SK-N-SH (cell line): ENCODE measurements at regions of chr17 and their contacts with region 1.

Region 1: GRCh38 chr17:47229535-47230443 is 20.6 kb downstream of the MYL4 start:
- DNase-seq: peak; percentile 87
- H3K4me3 ChIP-seq: peak overlapping the region; percentile 4 to 10; a peak in 1 of 4 replicates
- H3K27ac ChIP-seq: peak overlapping the region in 1 of 2 experiments; percentile 17; a peak in 2 of 4 replicates
- H3K4me1 ChIP-seq: peaks cover 5 to 12% of the 10 kb centered on the region in 2 experiments; a peak in 2 of 4 replicates
- H3K27me3 ChIP-seq: no peaks in the 10 kb centered on the region
- CTCF ChIP-seq: peak; percentile 100
- EP300 ChIP-seq: peak in 1 of 2 experiments; percentile 48; a peak in 1 of 4 replicates
- RAD21 ChIP-seq: peak; percentile 100

Region 2: DNA sequence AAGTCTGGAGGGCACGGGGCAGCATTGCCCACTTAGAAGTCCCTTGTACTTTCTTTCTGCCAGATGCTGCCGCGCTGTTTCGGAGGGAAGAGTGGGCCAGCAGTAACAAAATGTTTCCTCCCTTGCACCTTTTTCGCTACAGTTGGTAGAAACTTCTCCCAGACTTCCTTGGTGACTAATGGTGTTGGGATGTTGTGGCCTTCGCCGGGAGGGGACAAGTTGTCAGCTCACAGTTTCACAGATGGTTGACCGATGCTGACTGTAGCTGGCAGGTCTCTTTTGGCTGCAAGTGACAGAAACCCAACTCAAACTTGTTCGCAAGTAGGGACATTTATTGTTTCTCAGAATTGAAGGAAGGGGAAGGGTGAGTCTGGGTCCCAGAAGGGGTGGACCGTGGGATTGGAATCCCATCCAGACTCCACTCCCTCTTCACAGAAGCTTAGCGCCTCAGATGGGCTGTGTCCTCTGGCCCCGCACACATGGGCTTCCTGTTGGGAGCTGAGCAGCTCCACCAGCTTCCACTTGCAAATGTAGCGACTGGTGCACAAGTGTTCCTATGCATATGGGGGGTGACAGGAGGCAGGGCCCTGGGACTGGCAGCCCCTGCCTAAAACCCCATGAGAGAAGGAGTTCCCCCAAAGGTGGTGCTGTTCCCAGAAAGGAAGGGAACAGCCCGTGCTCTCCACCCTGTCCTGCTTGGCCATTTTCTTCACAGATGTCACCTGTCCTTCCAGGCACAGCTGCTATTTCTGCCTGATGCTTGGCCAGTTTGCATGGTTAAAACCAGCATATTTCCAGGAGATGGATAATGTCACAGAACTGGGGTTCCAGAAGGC is 219.8 kb before region 1 on chr17:
- CTCF ChIA-PET with region 1: no interaction called
- POLR2A ChIA-PET with region 1: no interaction called
- DNase-seq: no peak
- H3K4me3 ChIP-seq: no peak overlapping the region
- H3K27ac ChIP-seq: no peak overlapping the region
- H3K4me1 ChIP-seq: no peaks in the 10 kb centered on the region; a peak in 1 of 4 replicates
- H3K27me3 ChIP-seq: no peaks in the 10 kb centered on the region
- CTCF ChIP-seq: no peak
- EP300 ChIP-seq: no peak
- RAD21 ChIP-seq: no peak

Region 3: DNA sequence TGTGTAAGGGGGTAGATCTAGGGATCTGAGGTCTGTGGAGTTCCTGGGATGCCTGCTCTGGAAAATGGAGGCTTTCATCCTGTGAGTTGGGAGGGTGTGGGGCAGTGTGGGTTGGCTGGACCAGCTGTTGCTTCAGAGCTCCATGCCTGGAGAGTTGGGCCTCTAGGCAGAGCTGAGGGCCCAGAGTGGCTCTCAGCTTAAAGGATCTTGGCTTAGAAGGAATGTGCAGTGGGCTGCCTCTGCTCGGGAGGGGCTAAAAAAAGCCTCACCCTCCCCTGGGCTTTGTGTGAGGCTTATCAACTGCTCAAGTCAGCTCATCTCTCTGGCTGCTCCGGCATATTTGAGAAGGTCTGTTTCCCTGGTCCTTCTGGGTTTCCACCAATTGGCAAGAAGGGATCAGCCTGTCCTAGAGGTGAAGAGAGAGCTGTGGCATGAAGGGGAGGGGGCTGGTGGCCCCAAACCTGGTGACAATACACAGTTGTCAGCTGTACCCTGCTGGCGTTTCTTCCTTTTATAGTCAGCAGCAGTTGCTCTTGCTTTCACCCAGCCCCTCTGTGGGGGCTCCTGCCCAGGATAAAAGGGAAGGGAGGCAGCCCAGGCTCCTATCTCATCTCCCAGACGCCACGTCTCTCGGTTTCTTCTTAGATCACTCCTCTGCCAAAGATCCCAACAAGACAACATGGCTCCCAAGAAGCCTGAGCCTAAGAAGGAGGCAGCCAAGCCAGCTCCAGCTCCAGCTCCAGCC is 20.9 kb before region 1 on chr17 and contains the start of gene MYL4:
- CTCF ChIA-PET with region 1: interaction called, 23 read pairs
- POLR2A ChIA-PET with region 1: no interaction called
- DNase-seq: no peak
- H3K4me3 ChIP-seq: no peak within 1 kb of the TSS
- H3K27ac ChIP-seq: no peak within 1 kb of the TSS
- H3K4me1 ChIP-seq: no peaks in the 10 kb centered on the region
- H3K27me3 ChIP-seq: no peaks in the 10 kb centered on the region
- CTCF ChIP-seq: no peak
- EP300 ChIP-seq: no peak
- RAD21 ChIP-seq: no peak
- polyA plus RNA-seq, gene MYL4: not detected in 2 replicates

Region 4: DNA sequence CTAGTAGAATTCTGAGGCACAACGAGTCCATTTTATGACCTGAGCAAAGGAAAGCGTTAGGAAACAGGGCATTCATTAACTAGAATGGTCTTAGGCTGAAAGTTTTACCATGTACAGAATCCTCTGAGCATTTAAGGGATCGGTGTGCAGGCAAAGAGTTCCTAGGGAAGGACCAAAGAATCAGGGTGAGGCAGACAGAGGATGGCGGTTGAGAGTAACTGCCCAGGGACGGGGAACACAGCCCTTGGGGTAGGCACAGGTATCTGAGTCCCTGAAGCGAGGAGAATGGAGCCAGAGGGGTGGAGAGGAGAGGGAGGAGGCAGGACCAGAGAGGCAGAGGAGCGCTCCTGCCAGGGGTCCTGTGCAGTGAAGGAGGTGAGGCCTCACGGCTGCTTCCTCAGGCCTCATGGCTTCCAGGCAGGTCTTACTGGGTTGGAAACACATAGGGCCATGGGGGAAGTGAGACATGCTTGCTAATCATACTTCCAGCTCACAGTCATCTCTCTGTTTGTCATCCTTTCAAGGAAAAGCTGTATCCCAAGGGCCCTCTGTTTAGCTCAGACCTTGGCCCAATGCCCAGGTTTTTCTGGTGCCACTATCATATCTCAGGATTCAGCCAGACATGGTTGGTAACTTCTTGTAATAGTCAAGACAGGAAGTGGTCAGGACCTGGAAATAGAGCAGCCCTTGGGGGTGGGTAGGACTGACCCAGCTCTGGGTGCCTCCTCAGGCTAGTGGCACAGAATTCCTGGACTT is 10.0 kb after region 1 on chr17:
- CTCF ChIA-PET with region 1: interaction called, 71 read pairs
- POLR2A ChIA-PET with region 1: interaction called, 3 read pairs
- DNase-seq: peak; percentile 77
- H3K4me3 ChIP-seq: no peak overlapping the region
- H3K27ac ChIP-seq: peak overlapping the region; percentile 82 to 91
- H3K4me1 ChIP-seq: peaks cover 15% of the 10 kb centered on the region in 2 experiments
- H3K27me3 ChIP-seq: no peaks in the 10 kb centered on the region
- CTCF ChIP-seq: no peak
- EP300 ChIP-seq: peak in 1 of 2 experiments; percentile 92; a peak in 2 of 4 replicates
- RAD21 ChIP-seq: no peak

Region 5: GRCh38 chr17:47253541-47254402 is 24.0 kb after region 1 on chr17 and contains the start of gene ITGB3:
- CTCF ChIA-PET with region 1: interaction called, 31 read pairs
- POLR2A ChIA-PET with region 1: no interaction called
- DNase-seq: peak; percentile 96
- H3K4me3 ChIP-seq: peak within 1 kb of the TSS; percentile 64 to 72
- H3K27ac ChIP-seq: peak within 1 kb of the TSS in 1 of 2 experiments; percentile 26; a peak in 1 of 4 replicates
- H3K4me1 ChIP-seq: peaks cover 4 to 9% of the 10 kb centered on the region in 2 experiments; a peak in 1 of 4 replicates
- H3K27me3 ChIP-seq: no peaks in the 10 kb centered on the region
- CTCF ChIP-seq: peak; percentile 56
- EP300 ChIP-seq: no peak
- RAD21 ChIP-seq: peak; percentile 50
- polyA plus RNA-seq, gene ITGB3: 4.4 and 4.6 TPM in 2 replicates

Region 6: GRCh38 chr17:47279062-47279736 is 49.4 kb after region 1 on chr17:
- CTCF ChIA-PET with region 1: interaction called, 27 read pairs
- POLR2A ChIA-PET with region 1: interaction called, 3 read pairs
- DNase-seq: no peak
- H3K4me3 ChIP-seq: no peak overlapping the region
- H3K27ac ChIP-seq: peak overlapping the region in 1 of 2 experiments; percentile 75; a peak in 2 of 4 replicates
- H3K4me1 ChIP-seq: peaks cover 28 to 44% of the 10 kb centered on the region in 2 experiments
- H3K27me3 ChIP-seq: no peaks in the 10 kb centered on the region
- CTCF ChIP-seq: no peak
- EP300 ChIP-seq: peak in 1 of 2 experiments; percentile 82; a peak in 1 of 4 replicates
- RAD21 ChIP-seq: no peak

Region 7: DNA sequence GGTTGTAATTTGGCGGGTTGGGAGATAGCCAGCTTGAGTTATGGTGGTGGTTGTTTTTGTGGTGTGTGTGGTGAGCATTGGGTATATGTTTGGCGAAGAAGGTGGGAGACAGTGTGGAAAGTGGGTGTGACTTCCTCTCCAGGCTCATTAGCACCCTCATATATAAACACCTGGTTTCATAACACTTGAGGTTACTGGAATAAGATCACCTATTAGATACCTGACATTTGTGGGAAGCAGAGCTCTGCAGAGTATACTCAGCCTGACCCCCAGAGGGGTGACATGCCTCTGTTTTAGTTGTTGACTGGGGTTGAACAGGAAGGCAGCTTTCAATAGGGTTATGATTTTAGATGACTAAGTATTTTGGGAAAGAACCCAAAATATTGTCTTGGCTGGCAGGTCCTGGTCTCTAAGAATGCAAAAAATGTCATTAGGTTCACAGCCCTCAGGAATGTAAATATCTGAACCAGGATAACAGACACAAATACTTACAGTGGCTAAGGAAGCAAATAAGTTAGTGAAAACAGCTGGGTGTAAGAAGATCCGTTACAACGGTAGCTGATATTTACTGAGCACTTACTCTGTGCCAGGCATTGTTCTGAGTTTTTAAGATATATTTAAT is 75.6 kb after region 1 on chr17:
- CTCF ChIA-PET with region 1: interaction called, 279 read pairs
- POLR2A ChIA-PET with region 1: no interaction called
- DNase-seq: no peak
- H3K4me3 ChIP-seq: no peak overlapping the region
- H3K27ac ChIP-seq: peak overlapping the region in 1 of 2 experiments; percentile 50; a peak in 2 of 4 replicates
- H3K4me1 ChIP-seq: peaks cover 4 to 10% of the 10 kb centered on the region in 2 experiments; a peak in 2 of 4 replicates
- H3K27me3 ChIP-seq: no peaks in the 10 kb centered on the region
- CTCF ChIP-seq: no peak
- EP300 ChIP-seq: peak in 1 of 2 experiments; percentile 84; a peak in 2 of 4 replicates
- RAD21 ChIP-seq: no peak